WTC11 (cell line): ENCODE measurements at regions of chr3 and their contacts with region 1.

Region 1: DNA sequence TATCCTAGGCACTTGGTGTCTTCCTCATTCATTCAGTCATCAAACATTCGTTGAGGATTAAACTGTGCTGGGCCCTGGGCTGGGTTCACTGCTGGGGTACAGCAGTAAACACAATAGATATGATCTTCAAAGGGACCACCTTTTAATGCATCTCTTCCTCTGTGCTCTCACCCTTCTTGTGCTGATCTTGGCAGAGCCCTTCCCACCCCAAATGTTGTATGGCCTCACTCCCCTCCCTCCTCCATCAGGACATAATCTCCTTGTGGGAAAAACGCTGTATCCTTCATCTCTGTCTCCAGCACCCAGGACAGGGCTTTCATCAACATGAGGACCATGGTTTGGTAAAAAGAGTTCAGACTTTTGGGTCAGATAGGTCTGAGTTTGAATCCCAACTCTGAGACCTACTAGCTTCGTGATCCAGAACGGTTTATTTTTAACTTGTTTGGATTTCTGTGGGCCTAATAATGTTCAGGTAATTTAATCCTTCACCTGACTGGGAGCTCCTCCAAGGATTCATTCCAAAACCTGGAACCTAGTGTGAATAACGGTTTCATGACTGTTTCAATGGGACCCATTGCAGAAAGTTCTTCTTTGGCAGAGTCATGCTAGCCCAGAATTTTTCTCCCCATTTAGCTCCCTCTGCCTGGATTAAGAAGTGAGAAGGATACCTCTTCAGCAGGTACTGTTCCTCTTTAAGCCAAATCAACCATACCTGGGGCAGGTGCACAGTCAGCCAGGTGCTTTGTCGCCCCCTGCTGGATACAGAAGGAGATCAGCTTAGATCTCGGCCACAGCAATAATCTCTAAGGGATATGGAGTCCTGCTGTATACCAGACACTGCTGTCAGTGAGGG is 5.2 kb upstream of the WNT7A start:
- DNase-seq: peak; percentile 77
- ATAC-seq: peak; percentile 84
- H3K4me3 Mint-ChIP-seq: no peak overlapping the region
- H3K27ac Mint-ChIP-seq: no peak overlapping the region
- H3K4me1 Mint-ChIP-seq: no peaks in the 10 kb centered on the region
- H3K27me3 Mint-ChIP-seq: peaks cover 82% of the 10 kb centered on the region
- CTCF ChIP-seq: peak; percentile 88

Region 2: DNA sequence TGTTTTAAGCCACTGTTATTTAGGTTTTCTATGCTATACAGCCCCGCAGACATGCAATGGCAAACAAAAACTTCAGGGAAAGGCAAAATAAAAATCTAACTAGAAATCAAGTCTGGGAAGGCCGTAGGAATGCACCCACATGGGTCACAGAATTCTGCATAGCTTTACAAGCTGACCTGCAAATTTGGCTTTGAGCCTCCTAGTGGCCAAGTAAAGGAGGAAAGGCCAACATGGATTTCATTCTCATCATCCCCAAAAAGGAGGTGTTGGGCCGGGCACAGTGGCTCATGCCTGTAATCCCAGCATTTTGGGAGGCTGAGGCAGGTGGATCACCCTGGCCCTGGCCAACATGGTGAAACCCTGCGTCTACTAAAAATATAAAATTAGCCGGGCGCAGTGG is 211.9 kb before region 1 on chr3:
- CTCF ChIA-PET with region 1: interaction called, 23 read pairs
- POLR2A ChIA-PET with region 1: interaction called, 5 read pairs
- DNase-seq: no peak
- ATAC-seq: peak; percentile 73
- H3K4me3 Mint-ChIP-seq: no peak overlapping the region
- H3K27ac Mint-ChIP-seq: no peak overlapping the region
- H3K4me1 Mint-ChIP-seq: no peaks in the 10 kb centered on the region
- H3K27me3 Mint-ChIP-seq: peaks cover 4% of the 10 kb centered on the region
- CTCF ChIP-seq: peak; percentile 27; the same call in 1 of the 2 replicates

Region 3: DNA sequence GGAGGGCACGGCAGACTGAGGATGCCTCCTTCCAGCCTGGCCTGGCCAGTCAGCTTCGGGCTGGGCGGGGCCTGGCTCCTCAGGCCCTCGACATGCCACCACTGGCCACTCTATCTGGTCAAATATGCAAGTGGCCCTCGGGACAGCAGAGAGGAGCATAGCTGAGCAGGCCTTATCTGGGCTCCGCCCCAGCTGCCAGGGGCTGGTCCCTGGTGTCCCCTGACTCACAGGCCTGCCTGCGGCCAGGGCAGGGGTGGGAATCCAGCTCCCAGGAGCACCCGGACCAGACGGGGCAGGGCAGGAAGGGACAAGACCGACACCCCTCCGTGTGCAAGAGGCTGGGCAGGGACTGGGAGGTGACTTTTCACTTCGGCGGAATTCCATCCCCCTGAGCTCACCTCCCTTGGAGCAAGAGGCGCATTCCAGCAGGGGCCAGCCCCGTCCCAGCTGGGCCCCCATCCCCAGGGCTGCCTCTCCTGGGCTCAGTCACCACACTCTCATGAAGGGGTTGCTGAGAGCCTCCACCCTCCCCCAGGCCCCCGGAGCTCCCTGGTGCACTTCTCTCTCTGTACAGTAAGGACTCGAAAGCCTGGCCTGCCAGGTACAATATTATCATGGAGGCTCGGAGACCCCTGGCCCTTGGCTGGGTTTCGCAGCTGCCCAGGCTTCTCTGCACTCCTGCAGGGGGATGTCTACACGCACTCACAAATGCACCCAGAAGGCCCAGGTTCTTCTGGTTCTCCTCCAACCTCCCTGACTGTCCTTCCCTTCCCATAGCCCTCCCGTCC is 34.7 kb before region 1 on chr3:
- CTCF ChIA-PET with region 1: interaction called, 10 read pairs
- POLR2A ChIA-PET with region 1: no interaction called
- DNase-seq: peak; percentile 29
- ATAC-seq: peak; percentile 66
- H3K4me3 Mint-ChIP-seq: no peak overlapping the region
- H3K27ac Mint-ChIP-seq: no peak overlapping the region
- H3K4me1 Mint-ChIP-seq: peaks cover 22% of the 10 kb centered on the region
- H3K27me3 Mint-ChIP-seq: no peaks in the 10 kb centered on the region; the same call in 1 of the 2 replicates
- CTCF ChIP-seq: no peak